BJ (cell line): ENCODE measurements at regions of chr14 and their contacts with region 1.

Region 1: DNA sequence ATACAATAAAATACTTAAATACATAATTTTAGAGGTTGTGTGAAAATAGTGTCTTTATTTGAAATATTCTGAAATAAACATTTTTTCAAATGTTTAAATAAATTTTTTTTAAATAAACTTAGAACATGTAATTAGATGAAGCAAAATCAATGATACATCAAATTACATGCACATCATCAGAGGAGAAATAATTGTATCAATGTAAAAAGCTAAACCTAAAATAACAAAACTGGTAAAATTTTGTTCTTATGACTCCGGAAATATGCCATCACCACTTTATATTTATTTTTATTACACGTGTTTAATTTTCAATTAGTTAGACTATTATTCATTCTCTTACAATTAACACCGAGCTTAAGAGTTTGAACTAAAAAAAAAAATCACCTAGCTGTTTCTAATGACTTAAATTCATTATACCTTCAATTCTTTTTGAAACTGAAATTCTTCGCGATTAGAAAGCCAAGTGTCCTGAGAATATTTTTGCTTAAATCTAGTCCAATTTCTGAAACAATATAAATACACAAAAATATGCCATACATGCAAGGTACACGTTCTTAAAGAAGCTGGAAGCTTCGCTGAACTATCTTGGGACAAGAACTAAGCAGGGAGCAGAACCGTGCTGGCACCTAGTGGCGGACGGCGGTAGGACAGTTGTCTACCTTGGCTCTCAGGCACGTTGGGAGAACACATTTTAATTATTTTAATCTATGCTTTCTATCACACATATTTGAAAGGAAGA is 230.5 kb downstream of the SLC25A21 start:
- DNase-seq: no peak
- H3K4me3 ChIP-seq: no peak overlapping the region
- H3K27me3 ChIP-seq: no peaks in the 10 kb centered on the region
- CTCF ChIP-seq: peak; percentile 98

Region 2: DNA sequence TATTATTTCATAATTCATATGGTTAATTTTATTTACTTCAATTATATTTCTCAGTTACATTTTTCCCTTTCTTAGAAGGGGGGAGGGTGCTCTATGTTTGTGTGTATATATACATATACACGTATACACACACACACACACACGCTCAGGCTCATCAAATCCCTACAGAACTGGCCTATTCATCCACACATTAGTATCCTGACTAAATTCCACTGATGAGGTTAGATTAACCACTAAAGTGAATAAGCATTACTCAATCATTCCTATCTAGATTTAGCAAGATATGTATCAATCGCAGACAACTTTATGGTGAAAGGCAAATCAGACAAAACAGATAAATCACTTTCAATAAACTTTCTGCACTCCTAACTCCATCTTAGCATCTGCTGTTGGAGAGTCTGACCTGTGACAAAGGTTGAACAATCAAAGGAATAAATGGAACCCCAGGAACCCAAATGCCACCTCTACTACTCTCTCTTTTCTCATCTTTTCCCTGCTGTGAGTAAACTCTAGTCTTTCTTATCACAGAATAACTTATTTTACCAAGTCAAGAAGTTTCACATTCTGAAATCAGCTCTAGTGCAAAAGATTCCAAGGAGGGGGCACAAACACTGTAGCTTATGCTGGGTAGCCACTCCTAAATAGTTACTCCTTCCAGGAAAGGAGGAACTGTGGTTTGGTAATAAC is 1200.5 kb before region 1 on chr14:
- CTCF ChIA-PET with region 1: no interaction called
- POLR2A ChIA-PET with region 1: no interaction called
- DNase-seq: no peak
- H3K4me3 ChIP-seq: no peak overlapping the region
- H3K27me3 ChIP-seq: no peaks in the 10 kb centered on the region
- CTCF ChIP-seq: no peak

Region 3: DNA sequence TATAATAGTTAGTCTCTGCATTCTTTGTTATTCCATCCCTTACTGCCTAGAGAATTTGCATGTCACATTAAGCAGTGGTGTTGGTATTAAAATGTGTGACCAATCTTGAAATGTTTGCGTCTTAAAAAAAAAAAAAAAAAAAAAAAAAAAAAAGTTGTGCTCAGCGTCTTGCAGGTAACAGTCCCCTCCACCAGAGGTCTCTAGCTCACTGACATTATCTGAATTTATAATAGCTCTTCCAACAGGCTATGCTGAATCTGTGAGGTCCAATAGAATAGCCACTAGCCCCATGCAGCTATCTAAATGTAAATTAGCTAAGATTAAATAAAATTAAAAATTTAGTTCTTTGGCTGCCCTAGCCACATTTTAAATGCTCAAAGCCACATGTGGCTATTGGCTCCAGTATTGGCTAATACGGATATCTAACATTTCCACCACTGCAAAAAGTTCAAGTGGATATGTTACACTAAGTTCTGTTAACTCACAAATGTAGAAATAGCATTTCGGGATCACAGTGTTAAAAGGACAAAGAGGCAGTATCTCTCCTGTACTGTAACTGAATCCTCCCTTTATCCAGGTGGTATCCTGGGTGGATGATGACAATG is 388.2 kb before region 1 on chr14:
- CTCF ChIA-PET with region 1: interaction called, 17 read pairs
- POLR2A ChIA-PET with region 1: no interaction called
- DNase-seq: no peak
- H3K4me3 ChIP-seq: no peak overlapping the region
- H3K27me3 ChIP-seq: no peaks in the 10 kb centered on the region
- CTCF ChIP-seq: peak; percentile 79

Region 4: DNA sequence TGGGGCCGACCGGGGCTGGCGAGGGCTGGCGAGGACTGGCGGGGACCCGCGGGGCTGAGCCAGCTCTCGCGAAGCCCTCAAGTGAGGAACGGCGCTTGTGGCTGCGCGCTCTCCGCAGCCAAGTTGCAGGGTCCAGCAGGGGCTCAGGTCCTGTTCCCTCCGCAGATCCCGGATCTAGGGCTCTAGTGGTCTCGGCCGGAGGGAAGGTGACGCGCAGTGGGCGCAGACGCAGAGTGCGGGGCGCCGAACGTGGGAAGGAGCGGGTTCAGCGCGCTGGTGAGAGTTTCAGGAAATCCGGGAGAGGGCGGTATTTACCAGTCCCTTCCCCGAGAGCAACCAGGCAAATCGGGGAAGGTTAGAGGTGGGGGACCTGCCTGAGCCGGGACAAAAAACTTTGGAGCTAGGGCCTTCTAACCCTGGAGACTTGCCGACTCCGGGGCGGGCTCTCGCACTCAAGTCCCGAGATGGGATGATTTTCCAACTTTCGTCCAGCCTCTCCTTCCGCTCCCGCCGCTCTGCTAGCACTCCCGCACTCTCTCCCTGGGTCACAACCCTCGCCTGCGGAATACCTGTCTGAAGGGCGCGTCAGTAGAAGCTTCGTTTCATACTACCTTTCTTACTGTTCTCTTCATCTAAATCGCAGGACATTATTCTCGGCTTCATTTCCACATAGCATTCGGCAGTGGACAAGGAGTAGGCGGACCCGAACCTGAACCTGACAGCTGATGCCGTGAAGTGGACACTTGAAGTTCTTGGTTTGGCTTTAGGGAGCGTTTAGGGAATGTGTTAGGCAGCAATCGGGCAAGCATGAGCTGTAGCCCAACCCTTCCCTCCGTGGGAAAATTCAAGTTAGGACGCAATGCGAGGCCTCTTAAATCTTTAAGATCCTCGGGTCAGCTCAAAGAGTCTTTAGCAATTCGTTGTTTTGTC is 293.9 kb before region 1 on chr14:
- CTCF ChIA-PET with region 1: interaction called, 17 read pairs
- POLR2A ChIA-PET with region 1: no interaction called
- DNase-seq: no peak
- H3K4me3 ChIP-seq: peak overlapping the region; percentile 21
- H3K27me3 ChIP-seq: peaks cover 31% of the 10 kb centered on the region
- CTCF ChIP-seq: peak; percentile 60

Region 5: DNA sequence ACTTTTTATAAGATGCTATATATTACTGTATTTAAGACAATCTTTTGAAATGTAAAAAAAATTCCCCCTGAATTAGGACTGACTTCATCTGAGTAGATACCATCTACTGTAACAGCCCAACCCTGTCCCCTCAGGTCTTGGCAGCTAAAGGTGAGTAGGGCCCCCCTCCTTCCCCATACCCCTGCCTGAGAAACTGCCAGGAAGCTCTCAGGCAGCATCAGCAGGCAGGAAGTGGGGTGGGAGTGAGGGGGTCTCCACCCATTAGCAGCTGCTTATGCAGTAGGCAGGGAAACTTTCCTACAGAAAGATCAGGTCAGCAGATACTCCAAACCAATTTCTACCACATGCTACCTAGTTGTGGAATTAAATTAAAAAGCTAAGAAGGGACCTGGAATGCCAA is 217.8 kb before region 1 on chr14:
- CTCF ChIA-PET with region 1: no interaction called
- POLR2A ChIA-PET with region 1: no interaction called
- DNase-seq: no peak
- H3K4me3 ChIP-seq: no peak overlapping the region
- H3K27me3 ChIP-seq: no peaks in the 10 kb centered on the region
- CTCF ChIP-seq: no peak

Region 6: GRCh38 chr14:36928432-36928831 is 13.5 kb before region 1 on chr14:
- CTCF ChIA-PET with region 1: interaction called, 14 read pairs
- POLR2A ChIA-PET with region 1: no interaction called
- DNase-seq: no peak
- H3K4me3 ChIP-seq: no peak overlapping the region
- H3K27me3 ChIP-seq: no peaks in the 10 kb centered on the region
- CTCF ChIP-seq: no peak

Region 7: GRCh38 chr14:36952717-36953116 is 10.8 kb after region 1 on chr14:
- CTCF ChIA-PET with region 1: interaction called, 14 read pairs
- POLR2A ChIA-PET with region 1: no interaction called
- DNase-seq: peak; percentile 35
- H3K4me3 ChIP-seq: no peak overlapping the region
- H3K27me3 ChIP-seq: no peaks in the 10 kb centered on the region
- CTCF ChIP-seq: no peak

Region 8: GRCh38 chr14:37246427-37246914 is 304.5 kb after region 1 on chr14:
- CTCF ChIA-PET with region 1: no interaction called
- POLR2A ChIA-PET with region 1: no interaction called
- DNase-seq: no peak
- H3K4me3 ChIP-seq: no peak overlapping the region
- H3K27me3 ChIP-seq: no peaks in the 10 kb centered on the region
- CTCF ChIP-seq: peak; percentile 68